ENCODE measurements at regions of chr12 and their contacts with region 1.

Region 1: DNA sequence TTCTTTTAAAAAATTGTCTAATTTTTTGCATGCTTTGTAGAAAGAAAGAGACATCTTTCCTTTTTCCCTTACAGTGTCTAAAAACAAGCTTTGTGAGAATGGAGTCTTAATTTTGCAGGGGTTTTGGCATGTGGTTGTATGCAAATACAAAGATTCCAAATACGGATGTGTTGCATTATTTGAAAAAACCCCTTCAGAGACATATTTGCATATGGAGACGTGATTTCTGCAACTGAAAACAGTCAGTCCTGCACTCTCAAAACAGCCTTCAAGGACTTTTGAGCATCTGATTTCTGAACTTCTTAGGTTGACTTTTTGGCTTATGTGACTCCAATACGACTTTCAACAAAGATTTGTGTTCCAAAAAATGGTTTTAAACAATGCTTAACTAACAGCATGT is 7.8 kb downstream of the IRAK3 start:
- DNase-seq: no peak
- H3K4me3 Mint-ChIP-seq: peak overlapping the region; percentile 68
- H3K27ac Mint-ChIP-seq: peak overlapping the region; percentile 30
- H3K4me1 Mint-ChIP-seq: peaks cover 9% of the 10 kb centered on the region
- H3K27me3 Mint-ChIP-seq: peaks cover 12% of the 10 kb centered on the region

Region 2: GRCh38 chr12:66235626-66236281 is 38.9 kb after region 1 on chr12:
- intact Hi-C with region 1: loop called (anchors 5 kb)
- DNase-seq: no peak
- H3K4me3 Mint-ChIP-seq: peak overlapping the region; percentile 59
- H3K27ac Mint-ChIP-seq: no peak overlapping the region
- H3K4me1 Mint-ChIP-seq: peaks cover 6% of the 10 kb centered on the region
- H3K27me3 Mint-ChIP-seq: peaks cover 36% of the 10 kb centered on the region

Region 3: DNA sequence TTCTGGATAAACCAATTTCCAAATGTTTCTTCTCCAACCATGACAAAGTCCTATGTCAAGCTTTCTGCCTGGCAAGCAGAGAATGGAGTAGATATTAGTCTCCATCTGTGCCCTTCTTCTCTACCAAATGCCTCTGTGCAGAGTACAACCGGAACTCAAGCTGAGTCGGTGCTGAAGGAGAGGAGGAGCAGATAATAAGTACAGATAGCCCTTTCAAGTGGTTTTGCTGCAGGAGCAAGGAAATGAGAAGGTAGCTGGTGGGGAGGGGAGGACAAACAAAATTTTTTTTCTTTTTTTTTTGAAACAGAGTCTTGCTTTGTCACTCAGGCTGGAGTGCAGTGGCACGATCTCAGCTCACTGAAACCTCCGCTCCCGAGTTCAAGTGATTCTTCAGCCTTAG is 91.3 kb after region 1 on chr12:
- intact Hi-C with region 1: no loop called
- DNase-seq: peak; percentile 91
- H3K4me3 Mint-ChIP-seq: peak overlapping the region; percentile 2
- H3K27ac Mint-ChIP-seq: peak overlapping the region; percentile 85
- H3K4me1 Mint-ChIP-seq: peaks cover 60% of the 10 kb centered on the region
- H3K27me3 Mint-ChIP-seq: no peaks in the 10 kb centered on the region

Measured in activated CD4-positive, alpha-beta T cell treated with anti-CD3 and anti-CD28 coated beads, Interleukin-2, amount 10 ng/mL, durations not matched to agents 24 days and 14 days (primary cell).